ENCODE measurements at regions of chr4 and their contacts with region 1.

Region 1: DNA sequence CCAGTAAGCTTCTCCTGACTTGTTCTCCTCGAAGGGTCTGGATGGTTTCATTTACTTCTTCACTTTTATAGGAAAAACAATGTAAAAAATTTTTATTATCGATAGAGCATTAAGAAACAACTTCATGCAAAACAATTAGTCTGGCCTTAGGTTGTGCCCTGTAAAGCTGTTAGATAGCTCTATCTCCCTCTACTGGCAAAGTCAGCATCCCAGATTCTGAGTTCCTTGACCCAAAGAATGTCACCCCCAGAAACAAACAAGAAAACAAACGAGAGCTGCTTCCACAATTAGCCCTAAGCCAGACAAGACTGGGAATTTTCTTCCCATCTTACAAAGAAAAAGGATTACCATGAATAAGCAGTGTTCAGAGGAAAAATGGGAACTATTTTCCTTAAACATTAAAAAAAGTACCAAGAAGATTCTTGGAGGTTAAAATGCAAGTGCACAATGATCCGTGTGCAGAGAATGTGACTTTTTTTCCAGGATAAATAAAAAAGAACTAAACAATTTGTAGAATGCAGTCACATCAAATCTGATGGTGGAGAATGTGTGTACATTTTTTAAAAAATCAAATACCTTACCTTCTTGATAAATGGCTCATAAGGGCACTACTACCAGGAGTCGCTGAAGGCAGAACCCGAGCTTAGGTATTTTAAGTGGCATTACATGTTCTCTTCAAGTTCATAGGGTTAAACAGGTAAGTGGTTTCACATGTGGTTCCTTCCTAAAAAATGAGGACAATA is 293.2 kb downstream of the FBXO8 start:
- DNase-seq: no peak
- ATAC-seq: peak; percentile 81 to 86
- H3K4me3 ChIP-seq: peak overlapping the region; percentile 30
- H3K27ac ChIP-seq: peak overlapping the region; percentile 79
- H3K4me1 ChIP-seq: no peaks in the 10 kb centered on the region
- H3K27me3 ChIP-seq: no peaks in the 10 kb centered on the region

Region 2: DNA sequence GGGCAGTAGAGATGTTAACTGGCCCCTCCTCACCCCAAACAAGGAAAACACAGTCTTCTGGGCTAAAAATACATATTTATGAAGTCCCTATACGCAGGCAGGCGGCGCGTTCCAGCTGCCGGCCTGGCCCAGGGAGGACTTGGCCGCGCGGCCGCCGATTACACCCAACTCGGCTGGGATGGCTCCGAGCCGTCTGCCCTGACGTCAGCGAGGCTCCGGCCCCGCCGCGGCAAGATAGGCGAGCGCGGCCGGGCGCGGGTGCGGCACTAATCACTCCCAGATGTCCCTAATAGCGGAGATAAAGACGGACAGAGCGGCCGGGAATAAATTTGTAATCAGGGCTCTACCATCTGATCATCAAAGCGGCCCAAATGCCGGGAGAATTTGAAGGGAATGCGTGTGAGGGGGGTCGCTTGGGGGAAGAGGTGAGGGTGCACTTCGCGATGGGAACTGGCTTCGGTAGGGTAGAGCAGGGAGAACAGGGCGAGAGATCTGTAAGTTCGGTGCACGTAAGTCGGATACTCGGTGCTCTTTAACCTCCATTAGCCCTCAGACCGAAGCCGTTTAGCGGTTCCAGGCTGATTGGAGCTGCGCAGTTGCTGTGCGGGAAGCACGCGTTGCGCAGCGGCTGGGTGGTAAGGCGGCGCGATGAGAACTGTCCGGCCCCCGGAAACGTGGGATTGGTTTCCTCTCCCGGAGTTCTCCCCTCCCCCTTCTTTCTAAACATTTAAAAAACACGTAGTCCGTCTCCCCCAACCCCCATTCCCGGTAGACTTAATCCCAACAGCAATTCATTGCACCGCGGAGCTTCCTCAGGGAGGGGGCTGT is 468.0 kb before region 1 on chr4:
- intact Hi-C with region 1: loop called in 2 of 4 experiments (anchors 5 kb)
- DNase-seq: peak; percentile 95 to 98 (median 97)
- ATAC-seq: peak; percentile 89
- H3K4me3 ChIP-seq: peak overlapping the region; percentile 59
- H3K27ac ChIP-seq: peak overlapping the region; percentile 93
- H3K4me1 ChIP-seq: peaks cover 2% of the 10 kb centered on the region
- H3K27me3 ChIP-seq: no peaks in the 10 kb centered on the region

Region 3: DNA sequence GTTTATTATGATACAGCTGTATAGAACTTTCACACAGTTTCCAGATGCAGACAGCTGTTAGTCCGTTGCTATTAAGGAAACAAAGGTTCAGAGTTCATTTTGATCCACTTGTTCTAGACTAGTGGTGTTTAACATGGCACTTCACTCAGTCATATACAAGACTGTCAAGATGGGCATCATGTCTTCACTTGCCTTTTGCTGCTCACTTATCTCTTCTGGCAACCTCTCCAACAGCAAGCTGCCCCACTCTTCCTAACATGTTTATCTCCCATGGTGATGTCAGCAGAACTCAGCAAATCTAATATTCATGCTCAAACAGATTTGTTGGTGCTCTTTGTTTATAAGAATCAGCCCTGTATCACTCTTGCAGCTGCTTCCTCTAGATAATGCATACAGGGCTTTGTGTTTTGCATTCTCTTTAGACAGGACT is 224.1 kb before region 1 on chr4:
- intact Hi-C with region 1: loop called in 1 of 4 experiments (anchors 10 kb)
- DNase-seq: no peak
- ATAC-seq: peak in 1 of 2 donors; percentile 42
- H3K4me3 ChIP-seq: no peak overlapping the region
- H3K27ac ChIP-seq: no peak overlapping the region
- H3K4me1 ChIP-seq: peaks cover 2% of the 10 kb centered on the region
- H3K27me3 ChIP-seq: no peaks in the 10 kb centered on the region